ENCODE measurements at regions of chr18 and their contacts with region 1.

Region 1: DNA sequence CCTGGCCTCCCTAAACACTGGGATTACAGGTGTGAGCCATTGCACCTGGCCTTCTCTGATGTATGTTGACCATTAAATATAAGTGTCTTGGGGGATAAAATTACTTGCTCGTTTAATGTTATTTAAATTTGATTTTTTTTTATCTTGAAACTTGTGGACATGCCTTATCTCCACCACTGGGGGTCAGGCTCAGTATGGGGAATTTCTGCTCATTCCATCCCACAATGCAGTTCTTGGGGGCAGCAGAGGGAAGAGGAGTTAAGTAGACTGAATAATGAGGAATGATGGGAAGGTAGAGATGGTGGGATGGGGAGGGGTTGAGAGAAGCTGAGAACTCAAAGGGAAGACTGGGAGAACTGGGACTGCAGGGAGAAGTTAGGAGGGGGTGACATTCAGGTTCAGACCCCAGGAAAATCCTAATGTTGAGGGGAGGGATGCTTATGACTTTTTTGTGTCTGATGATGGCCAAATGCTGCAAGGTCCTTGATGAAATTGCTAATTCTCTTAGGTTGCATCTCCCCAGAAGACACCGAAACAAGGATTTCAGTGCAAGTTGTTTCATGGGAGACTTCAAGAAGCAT is 174.2 kb downstream of the MIB1 start:
- DNase-seq: peak in 1 of 2 donors; percentile 13
- ATAC-seq: peak in 7 of 8 donors; percentile 55 to 79 (median 65)
- H3K4me3 ChIP-seq: no peak overlapping the region
- H3K27ac ChIP-seq: no peak overlapping the region
- H3K4me1 ChIP-seq: no peaks in the 10 kb centered on the region
- H3K27me3 ChIP-seq: no peaks in the 10 kb centered on the region
- CTCF ChIP-seq: peak in 8 of 9 donors; percentile 20 to 67 (median 56)

Region 2: DNA sequence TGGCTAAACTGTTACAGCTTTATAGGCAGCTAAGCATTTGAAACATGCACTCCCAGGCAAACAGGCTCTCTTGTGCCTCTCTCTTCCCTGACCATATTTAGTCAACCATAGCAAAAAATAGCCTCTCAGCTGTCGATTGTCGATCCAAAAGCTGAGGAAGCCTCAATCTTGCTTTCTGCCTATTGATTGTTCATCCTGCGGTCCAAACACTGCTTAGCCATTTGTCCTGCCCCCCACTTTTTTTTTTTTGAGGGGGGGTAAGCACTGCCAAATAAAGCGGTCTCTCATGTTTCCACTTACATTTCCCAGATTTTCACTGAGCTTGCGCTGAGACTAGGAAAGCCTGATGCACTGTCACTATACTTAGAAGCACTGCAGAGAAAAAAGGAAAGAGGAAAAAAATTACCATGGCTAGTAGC is 83.4 kb before region 1 on chr18:
- intact Hi-C with region 1: no loop called
- DNase-seq: peak in 1 of 2 donors; percentile 74
- ATAC-seq: peak; percentile 69 to 88 (median 82)
- H3K4me3 ChIP-seq: peak overlapping the region; percentile 27 to 62 (median 47)
- H3K27ac ChIP-seq: peak overlapping the region; percentile 24 to 85 (median 78)
- H3K4me1 ChIP-seq: peaks cover 0 to 18% (median 0%) of the 10 kb centered on the region in 9 donors
- H3K27me3 ChIP-seq: no peaks in the 10 kb centered on the region
- CTCF ChIP-seq: no peak

Region 3: DNA sequence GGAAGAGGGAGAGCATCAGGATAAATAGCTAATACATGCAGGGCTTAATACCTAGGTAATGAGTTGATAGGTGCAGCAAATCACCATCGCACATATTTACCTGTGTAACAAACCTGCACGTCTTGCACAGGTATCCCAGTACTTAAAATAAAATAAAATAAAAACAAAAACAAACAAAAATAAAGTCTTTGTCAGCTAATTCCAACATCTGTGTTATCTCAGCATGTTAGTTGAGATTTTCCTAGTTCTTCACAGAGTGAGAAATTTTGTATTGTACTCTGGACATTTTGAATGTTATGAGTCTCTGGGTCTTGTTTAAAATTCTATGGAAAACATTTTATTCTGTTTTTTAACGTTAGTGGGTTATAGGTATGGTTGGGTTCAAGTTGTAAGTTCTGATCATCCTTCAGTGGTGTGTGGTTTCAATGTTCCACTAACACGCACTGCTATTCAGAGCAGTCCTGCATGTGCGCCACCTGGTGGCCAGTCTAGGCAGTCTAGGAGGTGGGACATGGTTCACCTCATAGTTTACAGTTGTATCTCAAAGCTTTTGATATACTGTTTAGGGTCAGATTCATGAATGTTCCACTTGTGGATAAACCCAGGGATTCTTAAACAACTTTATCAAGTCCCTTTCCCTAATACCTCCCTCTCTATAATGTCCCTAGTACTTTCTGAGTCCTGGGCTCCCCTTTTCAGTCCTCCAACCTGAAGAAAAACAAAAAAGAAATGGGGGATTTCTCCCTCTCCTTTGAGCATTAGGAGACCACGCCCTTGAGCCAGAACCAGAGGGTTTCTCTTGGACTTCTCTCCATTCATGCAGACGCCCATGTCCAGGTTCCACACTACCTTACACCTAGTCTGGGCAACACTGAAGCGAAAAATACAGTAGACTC is 41.2 kb after region 1 on chr18:
- intact Hi-C with region 1: loop called in 1 of 10 experiments (anchors 5 kb)
- DNase-seq: peak; percentile 73 to 85
- ATAC-seq: peak; percentile 72 to 96 (median 90)
- H3K4me3 ChIP-seq: no peak overlapping the region
- H3K27ac ChIP-seq: no peak overlapping the region
- H3K4me1 ChIP-seq: peaks cover 0 to 13% (median 0%) of the 10 kb centered on the region in 9 donors
- H3K27me3 ChIP-seq: peaks cover 0 to 3% (median 0%) of the 10 kb centered on the region in 7 donors
- CTCF ChIP-seq: peak; percentile 81 to 95 (median 91)

Region 4: DNA sequence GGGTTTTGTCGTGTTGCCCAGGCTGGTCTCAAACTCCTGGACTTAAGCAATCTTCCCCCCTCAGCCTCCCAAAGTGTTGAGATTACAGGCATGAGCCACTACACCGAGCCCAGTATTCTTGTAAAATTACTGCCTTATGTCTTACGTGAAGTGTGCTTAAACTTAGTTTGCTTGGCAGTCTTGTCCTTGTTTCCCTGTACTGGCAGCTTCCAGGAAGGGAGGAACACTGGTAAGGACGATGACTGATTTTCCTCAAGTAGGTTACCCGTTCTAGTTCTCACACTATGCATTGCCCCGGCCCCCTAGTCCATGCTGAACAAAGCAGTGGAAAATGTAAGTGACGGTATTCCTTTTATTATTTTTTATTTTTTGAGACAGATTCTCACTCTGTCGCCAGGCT is 234.9 kb after region 1 on chr18:
- intact Hi-C with region 1: no loop called
- DNase-seq: no peak
- ATAC-seq: no peak
- H3K4me3 ChIP-seq: no peak overlapping the region
- H3K27ac ChIP-seq: no peak overlapping the region
- H3K4me1 ChIP-seq: no peaks in the 10 kb centered on the region
- H3K27me3 ChIP-seq: no peaks in the 10 kb centered on the region
- CTCF ChIP-seq: no peak

Region 5: GRCh38 chr18:22163416-22164161 is 248.8 kb after region 1 on chr18:
- intact Hi-C with region 1: loop called in 5 of 10 experiments (anchors 5 to 10 kb)
- DNase-seq: no peak
- ATAC-seq: no peak
- H3K4me3 ChIP-seq: peak overlapping the region in 1 of 10 donors; percentile 77
- H3K27ac ChIP-seq: peak overlapping the region in 6 of 10 donors; percentile 96 to 100 (median 98)
- H3K4me1 ChIP-seq: peaks cover 0 to 46% (median 25%) of the 10 kb centered on the region in 9 donors
- H3K27me3 ChIP-seq: peaks cover 0 to 84% (median 51%) of the 10 kb centered on the region in 7 donors
- CTCF ChIP-seq: no peak

Region 6: GRCh38 chr18:22363867-22364463 is 449.1 kb after region 1 on chr18:
- intact Hi-C with region 1: loop called in 1 of 10 experiments (anchors 10 kb)
- DNase-seq: no peak
- ATAC-seq: peak; percentile 47 to 81 (median 72)
- H3K4me3 ChIP-seq: no peak overlapping the region
- H3K27ac ChIP-seq: no peak overlapping the region
- H3K4me1 ChIP-seq: no peaks in the 10 kb centered on the region
- H3K27me3 ChIP-seq: no peaks in the 10 kb centered on the region
- CTCF ChIP-seq: peak in 7 of 9 donors; percentile 32 to 69 (median 48)

Region 7: DNA sequence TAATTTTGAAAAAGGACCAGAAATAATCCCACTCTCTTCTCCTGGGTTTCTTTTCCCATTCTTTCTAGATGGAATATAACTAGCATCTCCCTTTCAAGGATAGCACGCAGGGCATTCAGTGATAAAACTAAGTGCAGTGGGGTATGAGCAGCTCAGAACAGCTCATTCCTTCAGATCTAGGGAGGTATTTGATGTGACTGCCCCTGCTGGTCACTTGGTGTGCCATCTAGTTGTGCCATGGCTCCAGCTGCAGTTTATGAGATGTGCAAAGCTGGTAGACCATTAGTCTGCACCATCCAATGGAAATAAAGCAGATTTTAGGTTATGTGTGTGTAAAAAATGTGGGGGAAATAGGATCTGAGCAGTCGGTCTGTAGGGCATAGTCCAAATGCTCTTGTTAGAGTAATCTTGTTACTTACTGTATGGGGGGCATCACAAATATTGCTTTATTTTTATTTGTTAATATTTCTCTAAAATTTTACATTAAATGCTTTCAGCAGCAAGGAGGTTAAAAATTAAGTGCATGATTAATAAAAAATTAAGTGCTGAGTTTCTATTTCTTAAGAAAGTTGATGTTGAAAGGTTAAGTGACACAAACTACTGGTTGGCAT is 463.9 kb after region 1 on chr18:
- intact Hi-C with region 1: loop called in 1 of 10 experiments (anchors 10 kb)
- DNase-seq: peak; percentile 14 to 27
- ATAC-seq: peak in 7 of 8 donors; percentile 64 to 87 (median 72)
- H3K4me3 ChIP-seq: no peak overlapping the region
- H3K27ac ChIP-seq: no peak overlapping the region
- H3K4me1 ChIP-seq: no peaks in the 10 kb centered on the region
- H3K27me3 ChIP-seq: no peaks in the 10 kb centered on the region
- CTCF ChIP-seq: peak; percentile 15 to 66 (median 56)

Region 8: DNA sequence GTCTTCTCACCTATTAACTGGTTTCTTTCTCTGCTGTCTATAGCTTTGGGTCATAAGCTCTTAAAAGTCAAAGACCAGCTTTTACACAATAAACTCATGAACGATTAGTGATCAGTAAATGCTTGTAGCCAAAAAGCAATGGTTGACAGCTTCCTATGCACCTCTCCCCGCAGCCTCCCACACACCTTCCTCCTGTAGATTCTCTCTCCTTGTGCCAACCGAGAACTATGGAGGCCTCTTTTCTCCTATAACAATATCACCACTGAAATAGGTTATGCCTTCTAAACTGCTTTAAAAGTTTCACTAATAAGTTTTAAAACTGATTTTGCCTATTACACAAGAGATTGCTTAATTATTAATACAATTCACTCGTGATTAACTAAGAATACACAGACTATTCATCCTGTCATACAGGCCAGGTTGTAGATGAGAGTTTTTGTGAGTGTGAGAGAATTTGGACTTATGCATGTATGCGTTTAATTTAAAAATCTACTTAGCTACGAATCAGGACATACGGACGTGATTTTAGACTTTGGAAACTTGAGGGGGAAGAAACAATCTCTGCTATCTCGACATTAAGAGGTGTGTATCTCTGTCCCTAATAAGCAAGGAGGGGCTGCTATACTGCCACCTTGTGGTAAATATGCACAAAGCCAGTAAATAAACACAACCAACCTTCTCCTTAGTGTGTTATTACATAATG is 789.2 kb after region 1 on chr18:
- intact Hi-C with region 1: loop called in 2 of 10 experiments (anchors 10 kb)
- DNase-seq: peak in 1 of 2 donors; percentile 29
- ATAC-seq: peak in 7 of 8 donors; percentile 67 to 85 (median 78)
- H3K4me3 ChIP-seq: no peak overlapping the region
- H3K27ac ChIP-seq: no peak overlapping the region
- H3K4me1 ChIP-seq: peaks cover 0 to 28% (median 3%) of the 10 kb centered on the region in 9 donors
- H3K27me3 ChIP-seq: no peaks in the 10 kb centered on the region
- CTCF ChIP-seq: peak; percentile 71 to 91 (median 85)